Activated naive CD4-positive, alpha-beta T cell treated with anti-CD3 and anti-CD28 coated beads for 36 hours (primary cell): ENCODE measurements at regions of chr3 and their contacts with region 1.

Region 1: GRCh38 chr3:136869282-136869681 is 7.3 kb downstream of the NCK1 start:
- DNase-seq: no peak
- H3K4me3 Mint-ChIP-seq: no peak overlapping the region
- H3K27ac Mint-ChIP-seq: no peak overlapping the region
- H3K4me1 Mint-ChIP-seq: peaks cover 57% of the 10 kb centered on the region
- H3K27me3 Mint-ChIP-seq: no peaks in the 10 kb centered on the region

Region 2: GRCh38 chr3:136882572-136882971 is 13.3 kb after region 1 on chr3:
- CTCF ChIA-PET with region 1: no interaction called
- intact Hi-C with region 1: loop called (anchors 1 kb)
- DNase-seq: no peak
- H3K4me3 Mint-ChIP-seq: no peak overlapping the region
- H3K27ac Mint-ChIP-seq: no peak overlapping the region
- H3K4me1 Mint-ChIP-seq: peaks cover 58% of the 10 kb centered on the region
- H3K27me3 Mint-ChIP-seq: no peaks in the 10 kb centered on the region